Esophagus muscularis mucosa (tissue), 4 donors: ENCODE measurements at regions of chr9 and their contacts with region 1.

Region 1: GRCh38 chr9:105157130-105157583 is 87.3 kb upstream of the SLC44A1 start:
- DNase-seq: no peak
- H3K4me3 ChIP-seq: no peak overlapping the region
- H3K27ac ChIP-seq: peak overlapping the region; percentile 37 to 59 (median 48)
- H3K4me1 ChIP-seq: peaks cover 0 to 26% (median 15%) of the 10 kb centered on the region in 4 donors
- H3K27me3 ChIP-seq: no peaks in the 10 kb centered on the region
- CTCF ChIP-seq: peak; percentile 58 to 68 (median 60)
- EP300 ChIP-seq: no peak
- POLR2A ChIP-seq: no peak

Region 2: DNA sequence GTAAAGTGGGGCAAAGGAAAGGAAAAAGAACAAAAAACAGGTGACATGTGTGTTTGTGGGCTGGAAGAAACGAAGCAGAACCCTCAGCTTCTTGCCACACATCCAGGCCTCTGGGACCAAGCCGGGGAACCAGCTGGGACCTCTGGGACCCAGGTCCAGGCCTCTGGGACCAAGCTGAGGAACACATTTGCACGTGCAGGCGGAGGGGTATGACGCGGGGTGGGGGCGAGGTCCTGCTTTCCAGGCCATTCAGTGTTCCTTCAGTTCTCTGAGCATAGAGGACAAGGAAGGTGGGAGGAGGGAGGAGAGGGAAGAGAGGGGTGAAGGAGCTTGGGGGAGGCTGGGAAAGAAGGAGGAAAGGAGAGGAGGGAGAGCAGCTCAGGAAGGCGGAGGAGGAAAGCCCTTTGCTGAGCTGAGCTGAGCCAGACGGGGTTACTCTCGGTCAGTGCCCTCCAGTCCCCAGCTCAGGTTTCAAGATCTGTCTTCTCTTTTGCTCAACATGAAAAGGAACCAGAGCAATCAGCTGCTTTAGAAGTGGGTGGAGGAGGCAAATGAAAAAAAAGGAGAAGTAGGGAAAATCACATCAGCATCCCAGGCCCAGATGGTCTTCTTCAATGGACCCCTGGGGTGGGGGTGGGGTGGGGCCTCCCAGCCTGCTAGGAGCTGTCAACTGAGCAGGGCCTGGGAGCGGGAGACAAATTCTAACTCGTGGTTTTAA is 288.3 kb before region 1 on chr9:
- intact Hi-C with region 1: loop called (anchors 5 kb)
- DNase-seq: no peak
- H3K4me3 ChIP-seq: no peak overlapping the region
- H3K27ac ChIP-seq: peak overlapping the region; percentile 53 to 80 (median 64)
- H3K4me1 ChIP-seq: peaks cover 46 to 90% (median 71%) of the 10 kb centered on the region in 4 donors
- H3K27me3 ChIP-seq: no peaks in the 10 kb centered on the region
- CTCF ChIP-seq: no peak
- EP300 ChIP-seq: no peak
- POLR2A ChIP-seq: no peak

Region 3: DNA sequence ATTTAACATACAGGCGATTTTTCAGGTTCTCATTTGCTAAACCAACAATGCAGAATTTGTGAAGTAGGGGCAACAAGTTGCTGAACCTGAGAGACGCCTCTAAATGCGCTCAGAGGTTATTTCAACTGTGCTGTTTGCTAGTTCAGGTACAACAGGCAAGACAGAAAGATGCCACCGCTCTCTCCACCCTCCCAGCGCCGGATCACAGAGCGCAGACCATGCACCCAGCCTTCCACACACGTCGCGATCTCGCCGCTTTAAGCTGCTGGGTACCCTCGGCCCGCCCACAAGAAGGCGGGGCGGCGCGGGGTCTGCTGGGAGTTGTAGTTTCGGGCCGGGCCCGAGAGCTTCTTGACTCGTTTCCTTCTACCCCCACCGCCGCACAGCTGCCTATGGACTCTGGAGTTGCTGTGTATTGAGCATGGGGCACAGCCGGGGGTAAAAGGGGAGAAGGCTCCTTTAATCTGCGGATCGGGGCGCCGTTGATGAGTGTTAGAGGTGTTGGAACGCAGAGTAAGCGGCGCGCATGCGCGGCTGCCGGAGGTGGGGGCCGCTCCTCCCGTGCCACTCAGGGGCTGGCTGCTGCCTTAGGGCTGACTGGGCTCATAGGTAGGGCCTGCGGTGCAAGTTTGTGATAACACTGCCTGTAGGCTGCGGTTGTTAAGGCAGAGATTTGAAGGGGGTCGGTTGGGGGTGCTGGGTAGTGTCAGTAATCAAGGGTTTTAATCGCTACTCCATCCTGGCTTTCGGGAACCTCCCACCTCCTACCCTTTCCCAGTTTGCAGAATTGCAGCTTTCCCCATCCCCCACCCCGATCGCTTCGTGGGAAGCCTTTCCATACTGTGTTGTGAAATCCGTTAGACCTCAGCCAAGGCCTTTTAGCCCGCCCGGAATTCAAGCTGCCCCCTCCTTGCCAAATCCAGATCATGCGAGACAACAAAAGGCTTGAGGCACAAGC is 188.9 kb before region 1 on chr9:
- intact Hi-C with region 1: loop called (anchors 2 kb)
- DNase-seq: peak; percentile 98
- H3K4me3 ChIP-seq: peak overlapping the region; percentile 67 to 92 (median 76)
- H3K27ac ChIP-seq: peak overlapping the region; percentile 93 to 98 (median 94)
- H3K4me1 ChIP-seq: peaks cover 20 to 40% (median 37%) of the 10 kb centered on the region in 4 donors
- H3K27me3 ChIP-seq: no peaks in the 10 kb centered on the region
- CTCF ChIP-seq: peak in 1 of 3 experiments; percentile 10
- EP300 ChIP-seq: peak; percentile 56
- POLR2A ChIP-seq: no peak

Region 4: GRCh38 chr9:105414947-105415661 is 257.9 kb after region 1 on chr9:
- intact Hi-C with region 1: loop called (anchors 2 kb)
- DNase-seq: no peak
- H3K4me3 ChIP-seq: no peak overlapping the region
- H3K27ac ChIP-seq: no peak overlapping the region
- H3K4me1 ChIP-seq: peaks cover 3 to 9% (median 6%) of the 10 kb centered on the region in 4 donors
- H3K27me3 ChIP-seq: no peaks in the 10 kb centered on the region
- CTCF ChIP-seq: peak; percentile 77 to 84 (median 79)
- EP300 ChIP-seq: no peak
- POLR2A ChIP-seq: no peak